ENCODE measurements at regions of chr1 and their contacts with region 1.

Region 1: DNA sequence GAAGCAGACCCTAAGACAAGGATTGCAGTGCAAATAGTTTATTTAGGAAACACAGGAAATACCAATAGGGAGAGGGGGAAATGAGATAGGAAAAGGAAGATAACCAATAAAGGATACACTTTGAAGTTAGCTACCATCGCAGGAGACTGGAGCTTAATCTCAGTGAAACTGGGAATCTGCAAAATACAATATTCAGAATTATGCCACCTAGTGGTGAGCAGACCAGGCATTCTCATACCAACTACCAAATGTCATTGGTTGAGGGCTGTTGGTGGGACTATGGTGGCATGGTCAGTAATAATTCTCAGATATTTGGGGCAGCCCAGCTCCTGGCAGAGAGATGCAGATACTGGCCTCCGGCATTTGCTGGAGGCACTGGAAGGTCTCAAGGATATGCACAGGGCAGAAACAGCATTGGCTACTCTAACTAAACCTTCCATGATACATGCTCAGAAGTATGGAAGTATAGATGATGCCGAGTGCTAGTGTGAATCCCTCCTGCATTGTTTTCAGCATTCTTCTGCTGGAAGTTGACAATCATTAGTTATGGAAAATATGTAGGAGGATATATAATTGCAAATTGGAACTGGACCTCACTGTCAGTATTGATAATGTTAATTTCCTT is 11.8 kb upstream of the ZFP69B start:
- DNase-seq: peak; percentile 63
- ATAC-seq: peak; percentile 64
- H3K4me3 ChIP-seq: no peak overlapping the region
- H3K4me3 Mint-ChIP-seq: no peak overlapping the region
- H3K27ac ChIP-seq: no peak overlapping the region
- H3K27ac Mint-ChIP-seq: no peak overlapping the region
- H3K4me1 ChIP-seq: no peaks in the 10 kb centered on the region
- H3K4me1 Mint-ChIP-seq: peaks cover 2% of the 10 kb centered on the region
- H3K27me3 ChIP-seq: no peaks in the 10 kb centered on the region
- H3K27me3 Mint-ChIP-seq: no peaks in the 10 kb centered on the region
- CTCF ChIP-seq: peak; percentile 83

Region 2: DNA sequence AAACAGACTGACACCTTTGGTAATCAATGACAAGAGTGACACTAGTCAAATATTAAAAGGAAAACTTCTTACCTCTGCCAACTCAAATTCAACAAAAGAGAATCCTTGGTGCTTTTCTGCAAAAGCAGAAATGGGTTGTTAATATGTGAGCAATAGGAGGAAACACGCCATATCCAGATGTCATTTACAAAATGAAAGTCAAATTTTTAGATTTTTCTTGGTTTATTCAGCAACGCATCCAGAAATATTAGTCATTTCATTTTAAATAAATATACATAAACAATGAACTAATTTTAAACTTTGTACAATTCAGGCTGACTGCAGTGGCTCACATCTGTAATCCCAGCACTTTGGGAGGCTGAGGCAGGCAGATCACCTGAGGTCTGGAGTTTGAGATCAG is 884.2 kb before region 1 on chr1:
- CTCF ChIA-PET with region 1: no interaction called
- POLR2A ChIA-PET with region 1: no interaction called
- intact Hi-C with region 1: no loop called
- DNase-seq: no peak
- ATAC-seq: no peak
- H3K4me3 ChIP-seq: no peak overlapping the region
- H3K4me3 Mint-ChIP-seq: no peak overlapping the region
- H3K27ac ChIP-seq: no peak overlapping the region
- H3K27ac Mint-ChIP-seq: no peak overlapping the region
- H3K4me1 ChIP-seq: peaks cover 0 to 16% of the 10 kb centered on the region in 2 donors
- H3K4me1 Mint-ChIP-seq: peaks cover 13% of the 10 kb centered on the region
- H3K27me3 ChIP-seq: no peaks in the 10 kb centered on the region
- H3K27me3 Mint-ChIP-seq: no peaks in the 10 kb centered on the region
- CTCF ChIP-seq: no peak

Region 3: GRCh38 chr1:40421431-40422384 is 16.8 kb before region 1 on chr1:
- CTCF ChIA-PET with region 1: interaction called, 24 read pairs
- POLR2A ChIA-PET with region 1: interaction called, 5 read pairs
- intact Hi-C with region 1: no loop called
- DNase-seq: no peak
- ATAC-seq: no peak
- H3K4me3 ChIP-seq: no peak overlapping the region
- H3K4me3 Mint-ChIP-seq: no peak overlapping the region
- H3K27ac ChIP-seq: peak overlapping the region in 1 of 2 donors; percentile 34
- H3K27ac Mint-ChIP-seq: peak overlapping the region; percentile 74
- H3K4me1 ChIP-seq: peaks cover 19 to 31% of the 10 kb centered on the region in 2 donors
- H3K4me1 Mint-ChIP-seq: peaks cover 44% of the 10 kb centered on the region
- H3K27me3 ChIP-seq: no peaks in the 10 kb centered on the region
- H3K27me3 Mint-ChIP-seq: no peaks in the 10 kb centered on the region
- CTCF ChIP-seq: no peak

Region 4: GRCh38 chr1:40508375-40509341 is 70.2 kb after region 1 on chr1 and contains the start of gene EXO5:
- CTCF ChIA-PET with region 1: no interaction called
- POLR2A ChIA-PET with region 1: interaction called, 14 read pairs
- intact Hi-C with region 1: no loop called
- DNase-seq: peak; percentile 83
- ATAC-seq: peak; percentile 98
- H3K4me3 ChIP-seq: peak within 1 kb of the TSS; percentile 68 to 94 (median 88)
- H3K4me3 Mint-ChIP-seq: peak within 1 kb of the TSS; percentile 93
- H3K27ac ChIP-seq: peak within 1 kb of the TSS; percentile 52 to 53
- H3K27ac Mint-ChIP-seq: peak within 1 kb of the TSS; percentile 85
- H3K4me1 ChIP-seq: peaks cover 6 to 16% of the 10 kb centered on the region in 2 donors
- H3K4me1 Mint-ChIP-seq: peaks cover 20% of the 10 kb centered on the region
- H3K27me3 ChIP-seq: no peaks in the 10 kb centered on the region
- H3K27me3 Mint-ChIP-seq: no peaks in the 10 kb centered on the region
- CTCF ChIP-seq: no peak
- total RNA-seq, gene EXO5: 13.9 and 16.9 TPM in 2 replicates